Right ventricle myocardium inferior (tissue), 1 donor: ENCODE measurements at regions of chr3 and their contacts with region 1.

Region 1: GRCh38 chr3:13346481-13347389 is 73.4 kb downstream of the NUP210 start:
- DNase-seq: peak; percentile 70
- ATAC-seq: peak; percentile 34

Region 2: GRCh38 chr3:13452490-13453335 is 106.0 kb after region 1 on chr3:
- intact Hi-C with region 1: loop called (anchors 10 kb)
- DNase-seq: no peak
- ATAC-seq: peak; percentile 40